IMR-90 (cell line): ENCODE measurements at regions of chr4 and their contacts with region 1.

Region 1: GRCh38 chr4:147866532-147867271 is 134.8 kb downstream of the ARHGAP10 start:
- DNase-seq: peak; percentile 91
- ATAC-seq: peak; percentile 85
- H3K4me3 ChIP-seq: no peak overlapping the region
- H3K27ac ChIP-seq: no peak overlapping the region
- H3K4me1 ChIP-seq: peaks cover 14% of the 10 kb centered on the region
- H3K27me3 ChIP-seq: no peaks in the 10 kb centered on the region
- CTCF ChIP-seq: peak; percentile 100; the same call in 1 of the 2 replicates
- POLR2A ChIP-seq: peak; percentile 61; the same call in 1 of the 2 replicates
- RAD21 ChIP-seq: peak; percentile 99

Region 2: GRCh38 chr4:147019061-147019460 is 847.6 kb before region 1 on chr4:
- CTCF ChIA-PET with region 1: no interaction called
- POLR2A ChIA-PET with region 1: no interaction called
- dilution Hi-C with region 1: no loop called
- in situ Hi-C with region 1: no loop called
- intact Hi-C with region 1: loop called (anchors 10 kb)
- DNase-seq: peak; percentile 56
- ATAC-seq: peak; percentile 89
- H3K4me3 ChIP-seq: no peak overlapping the region
- H3K27ac ChIP-seq: no peak overlapping the region
- H3K4me1 ChIP-seq: no peaks in the 10 kb centered on the region
- H3K27me3 ChIP-seq: peaks cover 8% of the 10 kb centered on the region
- CTCF ChIP-seq: peak; percentile 72
- POLR2A ChIP-seq: no peak
- RAD21 ChIP-seq: peak; percentile 88

Region 3: GRCh38 chr4:147160908-147161513 is 705.7 kb before region 1 on chr4:
- CTCF ChIA-PET with region 1: interaction called, 3 read pairs
- POLR2A ChIA-PET with region 1: no interaction called
- dilution Hi-C with region 1: no loop called
- in situ Hi-C with region 1: no loop called
- intact Hi-C with region 1: loop called (anchors 5 kb)
- DNase-seq: peak; percentile 71
- ATAC-seq: peak; percentile 84
- H3K4me3 ChIP-seq: no peak overlapping the region
- H3K27ac ChIP-seq: no peak overlapping the region
- H3K4me1 ChIP-seq: 0 out of 2 replicates have a peak, but pooled peaks cover 2% of the 10 kb centered on the region
- H3K27me3 ChIP-seq: no peaks in the 10 kb centered on the region
- CTCF ChIP-seq: peak; percentile 78
- POLR2A ChIP-seq: no peak
- RAD21 ChIP-seq: peak; percentile 84

Region 4: GRCh38 chr4:147617173-147617840 is 249.4 kb before region 1 on chr4 and contains the start of gene TMEM184C:
- CTCF ChIA-PET with region 1: no interaction called
- POLR2A ChIA-PET with region 1: no interaction called
- dilution Hi-C with region 1: no loop called
- in situ Hi-C with region 1: no loop called
- intact Hi-C with region 1: loop called (anchors 5 kb)
- DNase-seq: peak; percentile 93
- ATAC-seq: peak; percentile 99
- H3K4me3 ChIP-seq: peak within 1 kb of the TSS; percentile 90
- H3K27ac ChIP-seq: peak within 1 kb of the TSS; percentile 89
- H3K4me1 ChIP-seq: peaks cover 2% of the 10 kb centered on the region; the same call in 1 of the 2 replicates
- H3K27me3 ChIP-seq: no peaks in the 10 kb centered on the region
- CTCF ChIP-seq: no peak
- POLR2A ChIP-seq: peak; percentile 75
- RAD21 ChIP-seq: no peak; the same call in none of the 2 replicates
- total RNA-seq, gene TMEM184C: 67.6 and 71.7 TPM in 2 replicates

Region 5: DNA sequence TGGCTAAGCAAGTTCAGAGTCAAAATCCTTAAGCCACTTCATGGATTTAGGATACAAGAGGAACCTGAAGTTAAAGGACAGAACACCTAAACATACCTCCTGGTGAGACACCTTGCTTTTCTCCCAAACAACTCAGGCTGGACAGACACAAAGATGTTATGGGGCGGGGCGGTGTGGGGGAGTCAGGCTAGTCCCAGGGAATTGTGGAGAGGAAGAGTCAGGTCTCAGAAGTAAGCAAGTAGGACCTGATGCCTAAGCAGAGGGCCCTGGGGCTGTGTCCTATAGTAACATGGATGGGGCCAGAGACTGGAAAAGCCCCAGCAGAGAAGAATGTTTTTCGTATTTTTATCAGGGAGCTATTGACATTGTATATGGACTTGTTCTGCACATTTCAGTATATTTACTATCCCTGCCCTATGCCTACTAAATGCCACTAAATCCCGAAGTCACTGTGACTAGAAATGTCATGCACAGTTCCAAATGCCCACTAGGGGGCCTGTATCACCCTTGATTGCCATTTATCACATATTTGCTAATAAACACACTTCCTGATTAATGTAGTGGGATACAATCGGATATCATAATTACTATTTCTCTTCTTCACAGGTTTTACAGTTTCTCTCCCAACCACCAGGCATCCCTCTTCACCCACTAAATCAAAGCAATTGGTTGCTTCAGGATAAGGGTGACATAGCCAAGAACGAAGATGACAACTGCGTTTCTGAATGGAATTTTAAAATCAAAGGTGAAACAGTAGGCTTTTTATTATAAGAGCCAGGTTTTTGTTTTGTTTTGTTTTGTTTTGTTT is 158.6 kb before region 1 on chr4:
- CTCF ChIA-PET with region 1: interaction called, 14 read pairs
- POLR2A ChIA-PET with region 1: no interaction called
- dilution Hi-C with region 1: no loop called
- in situ Hi-C with region 1: loop called (anchors 5 kb)
- intact Hi-C with region 1: loop called (anchors 1 kb)
- DNase-seq: peak; percentile 34
- ATAC-seq: peak; percentile 67
- H3K4me3 ChIP-seq: no peak overlapping the region
- H3K27ac ChIP-seq: no peak overlapping the region
- H3K4me1 ChIP-seq: peaks cover 1% of the 10 kb centered on the region; the same call in 1 of the 2 replicates
- H3K27me3 ChIP-seq: no peaks in the 10 kb centered on the region
- CTCF ChIP-seq: peak; percentile 86
- POLR2A ChIP-seq: no peak
- RAD21 ChIP-seq: peak; percentile 80

Region 6: GRCh38 chr4:147755561-147756295 is 111.0 kb before region 1 on chr4:
- CTCF ChIA-PET with region 1: interaction called, 12 read pairs
- POLR2A ChIA-PET with region 1: no interaction called
- dilution Hi-C with region 1: no loop called
- in situ Hi-C with region 1: no loop called
- intact Hi-C with region 1: no loop called
- DNase-seq: peak; percentile 83
- ATAC-seq: peak; percentile 80
- H3K4me3 ChIP-seq: no peak overlapping the region
- H3K27ac ChIP-seq: peak overlapping the region; percentile 97
- H3K4me1 ChIP-seq: peaks cover 23% of the 10 kb centered on the region
- H3K27me3 ChIP-seq: no peaks in the 10 kb centered on the region
- CTCF ChIP-seq: no peak
- POLR2A ChIP-seq: no peak
- RAD21 ChIP-seq: no peak